A673 (cell line): ENCODE measurements at regions of chr2 and their contacts with region 1.

Region 1: DNA sequence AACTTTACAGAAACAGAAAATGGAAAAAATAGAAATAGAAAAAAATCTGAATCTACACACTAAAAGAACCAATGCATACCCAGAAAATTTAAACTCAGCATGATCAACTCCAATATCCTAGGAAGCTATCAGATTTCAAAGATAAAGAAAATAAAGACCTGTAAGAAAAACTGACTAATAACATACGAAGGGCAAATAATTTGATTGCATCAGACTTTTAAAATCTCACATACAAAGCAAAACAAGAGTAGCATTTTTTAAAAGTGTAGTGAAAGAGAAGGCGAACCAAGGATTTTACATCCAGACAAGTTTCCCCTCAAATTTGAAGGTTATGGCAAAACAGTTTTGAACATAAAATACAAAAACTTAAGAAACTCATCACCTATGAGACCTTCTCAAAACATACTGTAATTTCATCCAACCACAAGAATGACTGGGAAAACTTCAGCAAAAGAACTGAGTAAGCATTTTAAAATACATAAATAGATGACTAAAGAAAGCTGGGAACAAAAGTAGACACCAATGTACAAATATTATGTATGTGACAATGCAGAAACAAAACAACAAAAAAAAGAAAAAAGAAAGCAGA is 54.8 kb downstream of the NBAS start:
- DNase-seq: no peak
- H3K4me3 ChIP-seq: no peak overlapping the region
- H3K27ac ChIP-seq: no peak overlapping the region
- H3K4me1 ChIP-seq: no peaks in the 10 kb centered on the region
- H3K27me3 ChIP-seq: no peaks in the 10 kb centered on the region
- CTCF ChIP-seq: no peak

Region 2: GRCh38 chr2:14634201-14634884 is 872.0 kb before region 1 on chr2:
- CTCF ChIA-PET with region 1: no interaction called
- POLR2A ChIA-PET with region 1: no interaction called
- intact Hi-C with region 1: loop called (anchors 5 kb)
- DNase-seq: peak; percentile 9
- H3K4me3 ChIP-seq: no peak overlapping the region
- H3K27ac ChIP-seq: no peak overlapping the region
- H3K4me1 ChIP-seq: no peaks in the 10 kb centered on the region
- H3K27me3 ChIP-seq: peaks cover 90% of the 10 kb centered on the region
- CTCF ChIP-seq: peak; percentile 28; the same call in 1 of the 2 replicates

Region 3: DNA sequence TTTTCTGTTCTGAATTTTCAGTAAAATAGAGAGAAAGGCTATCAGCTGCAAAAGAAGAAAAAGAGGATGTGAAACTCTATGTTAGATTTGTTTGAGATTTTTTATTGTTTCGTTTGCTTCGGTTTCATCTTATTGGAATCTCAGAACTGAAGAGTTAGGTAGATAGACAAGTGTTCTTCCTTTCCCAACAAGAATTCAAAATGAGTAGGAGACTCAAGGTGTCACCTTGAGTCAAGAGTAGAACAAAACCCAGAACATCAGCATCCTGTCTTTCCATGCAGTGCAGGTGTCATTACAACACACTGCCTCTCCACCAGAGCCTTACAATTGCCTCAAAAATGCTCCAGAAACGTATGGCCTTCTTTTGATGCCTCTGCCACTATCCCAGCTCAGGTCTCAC is 33.7 kb after region 1 on chr2:
- CTCF ChIA-PET with region 1: no interaction called
- POLR2A ChIA-PET with region 1: no interaction called
- intact Hi-C with region 1: no loop called
- DNase-seq: no peak
- H3K4me3 ChIP-seq: no peak overlapping the region
- H3K27ac ChIP-seq: no peak overlapping the region
- H3K4me1 ChIP-seq: no peaks in the 10 kb centered on the region
- H3K27me3 ChIP-seq: no peaks in the 10 kb centered on the region
- CTCF ChIP-seq: no peak